T-cell (primary cell): ENCODE measurements at regions of chr10 and their contacts with region 1.

Region 1: GRCh38 chr10:69455006-69455763 is 3.9 kb downstream of the TSPAN15 start:
- DNase-seq: no peak
- ATAC-seq: no peak
- H3K4me3 ChIP-seq: no peak overlapping the region
- H3K4me3 Mint-ChIP-seq: no peak overlapping the region
- H3K27ac ChIP-seq: no peak overlapping the region
- H3K27ac Mint-ChIP-seq: no peak overlapping the region
- H3K4me1 ChIP-seq: peaks cover 0 to 15% of the 10 kb centered on the region in 2 experiments
- H3K4me1 Mint-ChIP-seq: peaks cover 17 to 22% (median 17%) of the 10 kb centered on the region in 3 donors
- H3K27me3 ChIP-seq: peaks cover 0 to 21% of the 10 kb centered on the region in 2 experiments
- H3K27me3 Mint-ChIP-seq: peaks cover 3 to 4% of the 10 kb centered on the region in 2 donors

Region 2: GRCh38 chr10:69425511-69426298 is 29.5 kb before region 1 on chr10:
- CTCF ChIA-PET with region 1: interaction called, 3 to 5 read pairs
- POLR2A ChIA-PET with region 1: interaction called in 1 of 2 experiments, 10 read pairs
- DNase-seq: peak in 33 of 35 experiments; percentile 32 to 78 (median 51)
- ATAC-seq: peak; percentile 89 to 96 (median 90)
- H3K4me3 ChIP-seq: no peak overlapping the region
- H3K4me3 Mint-ChIP-seq: peak overlapping the region in 1 of 3 donors; percentile 40
- H3K27ac ChIP-seq: peak overlapping the region; percentile 73
- H3K27ac Mint-ChIP-seq: peak overlapping the region; percentile 85 to 88
- H3K4me1 ChIP-seq: peaks cover 17 to 57% of the 10 kb centered on the region in 2 experiments
- H3K4me1 Mint-ChIP-seq: peaks cover 57 to 65% (median 62%) of the 10 kb centered on the region in 3 donors
- H3K27me3 ChIP-seq: peaks cover 0 to 3% of the 10 kb centered on the region in 2 experiments
- H3K27me3 Mint-ChIP-seq: no peaks in the 10 kb centered on the region

Region 3: DNA sequence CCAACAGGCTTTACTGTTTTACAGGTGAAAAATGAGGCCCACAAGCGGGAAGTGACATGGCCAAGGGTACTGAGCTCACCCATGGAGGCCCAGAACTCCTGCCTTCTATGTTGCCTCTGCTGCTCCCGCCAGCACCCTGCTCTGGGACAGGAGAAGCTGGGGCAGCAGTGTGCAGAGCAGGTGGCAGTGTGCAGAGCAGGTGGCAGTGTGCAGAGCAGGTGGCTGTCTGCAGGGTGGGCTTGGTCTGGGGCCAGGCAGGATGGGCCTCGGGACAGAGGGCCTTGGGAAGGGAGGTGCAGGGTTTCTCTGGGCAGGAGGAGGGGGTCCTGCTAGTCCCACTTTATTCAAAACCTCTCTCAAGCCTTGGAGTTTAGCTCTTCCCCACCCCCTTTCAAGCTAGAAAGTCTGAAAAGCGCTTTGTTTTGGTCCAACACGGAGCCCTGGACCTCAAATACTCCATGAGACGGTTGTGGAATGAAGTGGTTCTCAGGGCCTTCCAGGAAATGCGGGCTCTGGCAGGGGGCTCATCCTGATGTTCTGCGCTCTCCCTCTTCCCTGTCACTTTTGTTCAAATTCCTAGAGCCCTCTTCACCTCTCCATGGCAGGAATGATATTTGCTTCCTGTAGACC is 22.9 kb after region 1 on chr10:
- CTCF ChIA-PET with region 1: no interaction called
- POLR2A ChIA-PET with region 1: no interaction called
- DNase-seq: no peak
- ATAC-seq: no peak
- H3K4me3 ChIP-seq: no peak overlapping the region
- H3K4me3 Mint-ChIP-seq: no peak overlapping the region
- H3K27ac ChIP-seq: no peak overlapping the region
- H3K27ac Mint-ChIP-seq: no peak overlapping the region
- H3K4me1 ChIP-seq: no peaks in the 10 kb centered on the region
- H3K4me1 Mint-ChIP-seq: peaks cover 0 to 2% (median 0%) of the 10 kb centered on the region in 3 donors
- H3K27me3 ChIP-seq: peaks cover 0 to 21% of the 10 kb centered on the region in 2 experiments
- H3K27me3 Mint-ChIP-seq: peaks cover 2 to 4% of the 10 kb centered on the region in 2 donors